ENCODE measurements at regions of chrX and their contacts with region 1.

Region 1: DNA sequence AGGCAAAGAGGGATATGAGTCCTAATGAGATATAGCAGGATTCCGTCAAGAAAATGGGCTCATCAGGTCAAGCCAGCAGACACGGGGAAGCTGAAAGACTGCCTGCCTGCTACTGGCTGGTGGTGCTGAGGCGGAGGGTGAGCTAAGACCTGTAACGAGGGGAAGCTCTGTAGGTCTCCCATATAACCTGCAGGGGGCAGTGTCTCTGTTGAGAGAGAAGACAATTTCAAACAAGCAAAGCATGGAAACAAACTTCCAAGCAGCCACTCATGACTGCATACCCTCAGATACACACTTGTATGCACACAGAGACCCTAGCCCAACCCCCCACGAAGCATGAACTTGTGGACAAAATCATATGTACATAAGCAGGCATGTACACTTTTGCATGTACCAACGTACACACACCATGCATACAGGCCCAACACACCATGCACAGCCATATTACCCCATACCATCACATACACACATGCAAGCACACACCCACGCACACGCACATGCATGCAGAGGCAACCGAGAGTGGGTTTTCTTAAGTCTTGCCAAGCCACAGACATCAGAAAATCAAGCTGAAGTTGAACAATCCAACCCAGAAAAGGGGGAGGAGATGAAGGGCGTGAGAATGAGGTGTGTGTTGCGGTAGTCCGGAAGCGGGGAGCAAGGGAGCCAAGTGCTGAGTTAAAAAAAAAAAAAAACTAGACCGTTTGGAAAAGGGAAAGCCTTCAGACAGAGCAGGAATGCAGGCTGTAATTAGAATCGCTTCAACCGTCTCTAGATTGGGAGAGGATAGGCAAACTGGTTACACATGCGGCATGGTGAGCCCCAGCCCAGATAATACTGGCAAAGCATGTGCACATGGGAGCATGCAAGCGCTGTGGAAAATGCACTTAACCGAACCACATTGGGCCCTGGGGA is 71.0 kb downstream of the PJA1 start:
- DNase-seq: peak in 2 of 3 donors; percentile 34 to 63
- ATAC-seq: peak; percentile 56
- H3K4me3 ChIP-seq: no peak overlapping the region
- H3K27ac ChIP-seq: no peak overlapping the region
- H3K4me1 ChIP-seq: peaks cover 2% of the 10 kb centered on the region
- H3K27me3 ChIP-seq: no peaks in the 10 kb centered on the region

Region 2: DNA sequence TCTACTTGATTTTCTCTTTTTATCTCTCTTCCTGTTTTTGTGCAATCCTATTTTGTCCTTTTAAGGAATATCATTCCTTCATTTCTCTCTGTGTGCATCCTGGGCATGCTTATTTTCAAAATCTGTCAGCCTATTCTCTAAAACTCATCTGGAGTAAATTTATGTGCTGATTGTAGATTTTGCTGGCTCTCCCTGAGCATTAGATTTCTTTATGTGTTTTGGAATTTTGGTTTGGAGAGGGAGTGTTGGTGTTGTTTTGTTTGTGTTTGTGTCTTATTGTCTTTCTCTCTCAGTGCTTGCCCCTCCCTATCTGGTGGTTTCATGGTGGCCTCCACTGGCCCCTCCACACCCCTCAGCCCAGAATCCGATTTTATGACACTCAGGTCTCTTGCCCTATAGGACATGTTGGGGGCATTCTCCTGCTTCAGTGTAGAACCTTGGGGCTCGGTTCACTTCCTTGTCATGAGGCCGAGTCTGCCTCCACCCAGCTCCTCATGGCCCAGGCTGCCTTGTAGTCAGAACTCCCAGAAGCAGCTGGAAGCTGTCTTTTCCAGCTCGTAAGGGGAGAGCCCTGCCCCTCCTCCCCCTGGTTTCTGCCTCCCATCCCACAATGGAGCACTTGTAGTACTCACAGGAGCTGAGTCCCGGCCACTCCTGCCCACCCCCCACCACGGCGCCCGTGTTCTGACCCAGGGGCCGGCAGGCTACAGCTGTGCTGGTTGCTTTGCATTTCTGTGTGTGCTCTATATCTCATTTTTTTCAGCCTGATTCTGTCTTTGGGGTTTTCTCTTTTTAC is 95.6 kb after region 1 on chrX:
- intact Hi-C with region 1: loop called in 1 of 4 experiments (anchors 10 kb)
- DNase-seq: peak; percentile 42 to 80 (median 78)
- ATAC-seq: peak; percentile 65 to 75
- H3K4me3 ChIP-seq: no peak overlapping the region
- H3K27ac ChIP-seq: peak overlapping the region; percentile 8
- H3K4me1 ChIP-seq: no peaks in the 10 kb centered on the region
- H3K27me3 ChIP-seq: no peaks in the 10 kb centered on the region

Region 3: DNA sequence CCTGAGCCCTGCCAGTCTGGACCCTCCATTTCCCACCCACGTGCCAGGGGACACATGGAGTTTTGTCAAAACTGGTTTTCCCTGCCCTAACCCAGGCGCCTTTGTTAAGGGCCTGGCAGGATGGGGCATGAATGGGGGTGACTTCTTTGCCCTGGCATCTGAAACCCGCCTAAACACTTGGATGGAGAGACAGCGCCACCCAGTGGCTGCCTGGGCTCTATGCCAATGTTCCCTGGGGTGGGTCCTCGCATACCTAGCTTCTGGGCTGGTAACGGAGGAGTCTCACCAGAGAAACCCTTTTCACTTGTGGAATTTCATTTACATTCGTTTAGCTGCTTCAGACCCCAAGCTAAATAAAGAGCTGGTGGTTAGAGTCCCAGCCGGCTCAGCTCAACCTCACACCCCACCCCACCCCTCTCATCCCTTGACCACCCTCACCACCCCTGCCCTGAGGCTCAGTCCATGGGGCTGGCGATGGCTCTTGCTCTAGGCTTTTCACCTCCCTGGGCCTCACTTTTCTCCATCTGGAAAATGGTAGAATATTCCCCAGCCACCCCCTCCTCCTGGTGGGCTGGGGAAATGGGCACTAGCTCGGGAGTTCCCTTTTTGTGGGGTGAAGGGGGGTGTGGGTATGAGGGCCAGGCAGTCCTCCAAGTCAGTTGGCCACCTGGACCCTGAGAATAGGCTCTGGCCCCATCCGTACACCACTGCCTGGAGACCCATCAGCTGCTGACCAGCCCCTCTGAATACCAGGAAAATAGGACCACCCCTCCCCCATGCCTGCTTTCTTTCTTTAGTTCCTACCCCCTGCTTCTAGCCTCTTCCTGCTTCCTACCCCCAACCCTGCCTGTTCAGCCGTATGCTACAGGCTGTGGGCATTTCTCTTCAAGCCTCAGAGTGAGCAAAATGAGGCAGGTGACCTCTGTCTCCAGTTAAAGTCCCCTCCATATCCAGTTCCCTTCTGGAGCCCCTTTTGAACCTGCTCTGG is 128.2 kb after region 1 on chrX:
- intact Hi-C with region 1: loop called in 1 of 4 experiments (anchors 10 kb)
- DNase-seq: peak; percentile 64 to 87 (median 86)
- ATAC-seq: peak; percentile 86 to 89
- H3K4me3 ChIP-seq: no peak overlapping the region
- H3K27ac ChIP-seq: no peak overlapping the region
- H3K4me1 ChIP-seq: no peaks in the 10 kb centered on the region
- H3K27me3 ChIP-seq: no peaks in the 10 kb centered on the region

Measured in right cardiac atrium (tissue), 5 donors.